Calu3 (cell line): ENCODE measurements at regions of chrX and their contacts with region 1.

Region 1: DNA sequence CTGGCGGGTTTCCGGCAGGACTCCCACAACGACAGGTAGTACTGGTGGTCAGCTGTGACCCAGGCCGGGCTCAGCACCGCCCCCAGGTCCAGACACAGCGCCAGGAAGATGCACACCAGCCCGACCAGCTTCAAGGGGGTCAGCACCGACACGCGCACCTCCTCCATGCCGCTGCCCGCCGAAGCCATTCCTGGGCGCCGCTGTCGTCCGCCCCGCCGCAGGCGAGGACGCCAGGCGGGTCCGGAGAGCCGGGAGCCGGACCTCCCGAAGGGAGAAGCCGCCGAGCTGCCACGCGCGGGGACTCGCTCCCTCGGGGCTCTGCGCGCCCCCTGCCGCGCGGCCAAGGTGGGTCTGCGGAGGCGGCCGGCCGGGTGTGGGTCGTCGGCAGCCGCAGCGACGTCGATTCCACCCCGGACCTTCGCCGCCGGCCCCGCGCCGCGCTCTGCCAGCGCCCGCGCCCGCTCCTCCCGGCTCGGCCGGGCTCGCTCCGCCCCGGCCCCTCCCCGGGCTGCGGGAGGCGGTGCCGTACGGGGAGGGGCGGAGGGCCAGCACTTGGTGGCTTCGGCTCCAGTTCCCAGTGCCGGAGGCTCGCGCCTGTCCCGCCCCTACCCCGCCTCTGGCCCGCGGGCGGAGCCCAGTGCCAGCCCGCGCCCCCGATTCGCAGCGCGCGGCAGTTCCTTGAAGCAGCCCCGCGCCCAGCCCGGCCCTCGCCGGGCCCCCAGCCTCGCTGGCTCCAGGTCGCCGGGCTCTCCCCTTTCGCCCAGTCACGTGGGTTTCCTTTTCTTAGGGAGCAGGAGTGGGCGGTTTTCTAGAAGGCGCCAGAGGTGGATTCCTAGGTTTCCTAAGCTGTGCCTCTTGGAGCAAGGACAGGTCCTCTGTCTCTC is at the start of gene TMEM47:
- DNase-seq: peak; percentile 90
- H3K4me3 Mint-ChIP-seq: peak within 1 kb of the TSS; percentile 96
- H3K27ac Mint-ChIP-seq: peak within 1 kb of the TSS; percentile 97
- H3K4me1 Mint-ChIP-seq: no peaks in the 10 kb centered on the region
- H3K27me3 Mint-ChIP-seq: no peaks in the 10 kb centered on the region
- CTCF ChIP-seq: no peak
- total RNA-seq, gene TMEM47: 80.9 and 99.6 TPM in 2 replicates

Region 2: DNA sequence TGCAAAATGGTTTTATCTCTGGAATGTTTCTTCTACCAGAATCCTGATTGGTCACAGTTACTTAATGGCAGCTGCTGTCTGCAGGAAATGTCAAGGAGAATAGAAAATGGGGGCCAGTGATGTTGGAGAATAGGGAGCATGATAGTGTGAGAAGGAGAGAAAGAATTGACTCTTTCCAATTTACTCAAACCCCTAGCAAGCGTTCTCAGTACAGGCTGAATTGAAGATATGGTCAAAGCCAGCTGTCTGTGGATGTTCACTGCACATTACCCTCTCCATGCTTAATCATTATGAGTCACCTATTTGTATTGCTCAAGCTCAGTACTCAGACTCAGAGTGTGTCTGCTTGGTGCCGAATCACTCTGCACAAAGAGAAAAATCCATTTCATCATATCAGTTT is 227.7 kb after region 1 on chrX:
- CTCF ChIA-PET with region 1: no interaction called
- intact Hi-C with region 1: loop called (anchors 10 kb)
- DNase-seq: no peak
- H3K4me3 Mint-ChIP-seq: no peak overlapping the region
- H3K27ac Mint-ChIP-seq: no peak overlapping the region
- H3K4me1 Mint-ChIP-seq: peaks cover 9% of the 10 kb centered on the region
- H3K27me3 Mint-ChIP-seq: no peaks in the 10 kb centered on the region
- CTCF ChIP-seq: no peak

Region 3: DNA sequence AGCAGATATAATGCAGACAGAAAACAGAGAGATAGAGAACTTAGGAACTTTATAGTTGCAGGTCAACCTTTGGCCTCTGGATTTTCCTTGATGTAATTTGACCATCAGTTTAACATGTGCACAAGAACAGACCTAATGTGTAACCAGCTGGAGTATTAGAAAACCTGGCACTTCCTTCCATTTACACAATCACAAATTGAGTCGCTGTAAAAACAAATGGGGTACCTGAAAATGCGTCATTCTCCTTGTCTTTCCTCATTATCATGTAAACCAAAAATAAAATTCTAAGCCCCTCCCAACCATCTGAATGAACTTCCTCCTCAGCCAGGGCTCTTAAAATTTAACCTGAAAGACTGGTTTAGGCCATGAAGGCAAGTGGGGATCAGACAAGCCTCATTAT is 782.6 kb after region 1 on chrX:
- CTCF ChIA-PET with region 1: no interaction called
- intact Hi-C with region 1: loop called (anchors 10 kb)
- DNase-seq: peak; percentile 49
- H3K4me3 Mint-ChIP-seq: no peak overlapping the region
- H3K27ac Mint-ChIP-seq: peak overlapping the region; percentile 85
- H3K4me1 Mint-ChIP-seq: peaks cover 28% of the 10 kb centered on the region
- H3K27me3 Mint-ChIP-seq: no peaks in the 10 kb centered on the region
- CTCF ChIP-seq: no peak